Right ventricle myocardium inferior (tissue), 1 donor: ENCODE measurements at regions of chr4 and their contacts with region 1.

Region 1: GRCh38 chr4:128553686-128554515 is 255.6 kb upstream of the JADE1 start:
- DNase-seq: no peak
- ATAC-seq: no peak

Region 2: GRCh38 chr4:128155231-128155855 is 398.6 kb before region 1 on chr4:
- intact Hi-C with region 1: no loop called
- DNase-seq: peak; percentile 63
- ATAC-seq: peak; percentile 37

Region 3: DNA sequence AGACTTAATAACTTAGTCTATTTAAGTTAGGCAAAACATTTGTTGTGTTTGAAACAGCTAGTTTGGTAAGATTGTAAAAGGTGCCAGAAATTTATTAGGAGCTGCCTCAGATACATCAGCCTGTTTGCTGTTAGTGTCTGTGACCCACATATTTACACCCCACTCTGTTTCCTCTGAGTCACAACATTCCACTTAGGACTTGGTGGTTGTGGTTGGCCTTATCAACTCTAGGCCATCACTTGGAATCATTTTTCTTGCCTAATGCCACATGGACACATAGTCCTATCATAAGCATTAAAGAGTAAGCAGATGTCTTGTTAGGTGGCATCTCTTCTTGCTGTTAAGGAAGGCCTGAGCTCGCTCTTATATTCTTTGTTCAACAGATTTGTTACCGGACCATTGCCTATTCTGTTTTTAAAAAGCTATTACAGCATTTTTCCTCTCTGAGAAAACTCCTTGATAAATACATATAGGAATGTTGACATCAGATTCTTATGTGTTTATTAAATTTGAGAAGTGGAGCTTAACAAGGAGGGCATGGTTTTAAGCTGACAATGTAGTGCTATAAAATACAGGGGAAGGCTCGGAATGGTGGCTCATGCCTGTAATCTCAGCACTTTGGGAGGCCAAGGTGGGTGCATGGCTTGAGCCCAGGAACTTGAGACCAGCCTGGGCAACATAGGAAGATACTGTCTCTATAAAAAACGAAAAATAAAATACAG is 215.1 kb before region 1 on chr4:
- intact Hi-C with region 1: no loop called
- DNase-seq: no peak
- ATAC-seq: no peak

Region 4: GRCh38 chr4:128386761-128387599 is 166.9 kb before region 1 on chr4:
- intact Hi-C with region 1: loop called (anchors 5 kb)
- DNase-seq: peak; percentile 89
- ATAC-seq: peak; percentile 95

Region 5: GRCh38 chr4:128454281-128455075 is 99.4 kb before region 1 on chr4:
- intact Hi-C with region 1: loop called (anchors 2 kb)
- DNase-seq: peak; percentile 78
- ATAC-seq: peak; percentile 93